ENCODE measurements at regions of chr12 and their contacts with region 1.

Region 1: GRCh38 chr12:14995583-14996425 is 23.0 kb downstream of the PDE6H start:
- DNase-seq: no peak
- ATAC-seq: peak; percentile 63
- H3K4me3 Mint-ChIP-seq: no peak overlapping the region
- H3K27ac Mint-ChIP-seq: peak overlapping the region; percentile 37
- H3K4me1 Mint-ChIP-seq: peaks cover 30% of the 10 kb centered on the region
- H3K27me3 Mint-ChIP-seq: peaks cover 19% of the 10 kb centered on the region

Region 2: DNA sequence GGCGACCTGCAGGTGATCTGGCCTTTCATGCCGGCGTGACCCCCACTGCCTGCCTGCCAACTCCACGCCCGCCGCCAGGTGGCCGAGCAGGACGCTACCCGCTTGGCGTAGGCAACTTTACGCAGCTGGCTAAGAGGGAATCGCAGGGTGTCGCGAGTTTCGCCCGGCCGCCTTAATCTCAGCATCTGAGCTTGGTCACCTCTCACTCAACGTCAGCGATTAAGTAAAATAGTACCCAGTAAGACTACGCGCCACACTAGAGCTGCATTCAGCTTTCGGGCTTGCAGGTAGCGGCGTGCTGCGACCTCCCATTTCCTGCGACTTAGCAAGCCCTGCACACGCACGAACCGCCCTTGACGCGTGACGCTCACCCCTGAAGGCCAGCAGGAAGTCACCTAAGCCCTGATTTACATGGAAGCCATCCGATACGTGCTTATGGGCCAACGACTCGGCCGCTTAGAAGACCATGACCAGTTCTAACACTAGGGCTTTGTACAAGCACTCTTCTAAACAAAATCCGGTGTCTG is 225.8 kb before region 1 on chr12:
- CTCF ChIA-PET with region 1: interaction called, 8 read pairs
- POLR2A ChIA-PET with region 1: interaction called, 11 read pairs
- DNase-seq: peak; percentile 91
- ATAC-seq: peak; percentile 52
- H3K4me3 Mint-ChIP-seq: peak overlapping the region; percentile 99
- H3K27ac Mint-ChIP-seq: peak overlapping the region; percentile 99
- H3K4me1 Mint-ChIP-seq: peaks cover 48% of the 10 kb centered on the region
- H3K27me3 Mint-ChIP-seq: no peaks in the 10 kb centered on the region

Region 3: DNA sequence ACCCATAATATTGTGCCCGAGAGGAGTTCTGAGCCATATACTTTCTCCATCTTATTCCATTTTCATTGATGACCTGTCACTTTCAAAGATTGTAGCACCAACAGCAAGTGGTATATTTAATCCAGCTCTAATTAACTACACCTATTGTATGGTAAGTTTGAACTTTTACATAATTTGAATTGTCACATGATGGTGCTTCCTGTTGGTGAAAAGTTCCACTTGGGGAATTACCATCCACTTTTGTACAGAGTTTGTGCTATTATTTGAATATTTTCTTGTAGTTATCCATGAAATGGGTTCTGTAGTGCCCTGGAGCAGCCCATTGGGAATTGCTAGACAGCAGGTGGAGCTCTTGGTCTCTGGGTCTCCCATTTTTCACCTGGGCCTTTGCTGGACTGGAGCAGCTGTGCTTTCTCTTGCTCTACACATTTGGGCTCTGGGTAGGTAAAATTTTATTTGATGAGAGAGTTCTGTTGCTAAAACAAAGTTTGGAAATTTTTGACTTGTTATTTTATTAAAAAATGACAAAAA is 184.8 kb before region 1 on chr12:
- CTCF ChIA-PET with region 1: interaction called, 11 read pairs
- POLR2A ChIA-PET with region 1: no interaction called
- DNase-seq: no peak
- ATAC-seq: no peak
- H3K4me3 Mint-ChIP-seq: no peak overlapping the region
- H3K27ac Mint-ChIP-seq: no peak overlapping the region
- H3K4me1 Mint-ChIP-seq: peaks cover 16% of the 10 kb centered on the region
- H3K27me3 Mint-ChIP-seq: no peaks in the 10 kb centered on the region

Region 4: DNA sequence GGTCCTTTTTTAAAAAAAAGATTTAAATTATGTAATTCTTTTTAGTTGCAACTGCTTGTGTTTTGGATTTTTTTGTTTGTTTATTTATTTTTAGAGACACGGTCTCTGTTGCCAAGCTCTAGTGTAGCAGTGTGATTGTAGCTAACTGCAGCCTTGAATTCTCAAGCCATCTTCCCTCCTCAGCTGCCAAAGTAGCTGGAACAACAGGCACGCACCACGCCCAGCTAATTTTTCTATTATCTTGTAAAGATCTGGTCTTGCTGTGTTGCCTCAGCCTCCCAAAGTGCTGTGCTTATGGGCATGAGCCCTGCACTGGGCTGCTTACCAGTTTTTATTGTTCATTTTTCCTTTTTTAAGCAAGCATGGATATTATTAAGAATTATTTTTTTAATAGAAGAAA is 141.8 kb before region 1 on chr12:
- CTCF ChIA-PET with region 1: interaction called, 89 read pairs
- POLR2A ChIA-PET with region 1: no interaction called
- DNase-seq: no peak
- ATAC-seq: no peak
- H3K4me3 Mint-ChIP-seq: no peak overlapping the region
- H3K27ac Mint-ChIP-seq: no peak overlapping the region
- H3K4me1 Mint-ChIP-seq: no peaks in the 10 kb centered on the region
- H3K27me3 Mint-ChIP-seq: no peaks in the 10 kb centered on the region

Region 5: GRCh38 chr12:14948672-14949071 is 47.1 kb before region 1 on chr12:
- CTCF ChIA-PET with region 1: interaction called, 15 read pairs
- POLR2A ChIA-PET with region 1: interaction called, 3 read pairs
- DNase-seq: peak; percentile 81
- ATAC-seq: peak; percentile 79
- H3K4me3 Mint-ChIP-seq: peak overlapping the region; percentile 76
- H3K27ac Mint-ChIP-seq: peak overlapping the region; percentile 93
- H3K4me1 Mint-ChIP-seq: peaks cover 83% of the 10 kb centered on the region
- H3K27me3 Mint-ChIP-seq: no peaks in the 10 kb centered on the region

Region 6: GRCh38 chr12:14979468-14979867 is 16.3 kb before region 1 on chr12:
- CTCF ChIA-PET with region 1: interaction called, 14 read pairs
- POLR2A ChIA-PET with region 1: no interaction called
- DNase-seq: no peak
- ATAC-seq: peak; percentile 59
- H3K4me3 Mint-ChIP-seq: peak overlapping the region; percentile 35
- H3K27ac Mint-ChIP-seq: peak overlapping the region; percentile 30
- H3K4me1 Mint-ChIP-seq: peaks cover 65% of the 10 kb centered on the region
- H3K27me3 Mint-ChIP-seq: no peaks in the 10 kb centered on the region

Measured in activated CD8-positive, alpha-beta T cell treated with anti-CD3 and anti-CD28 coated beads, Interleukin-2, amount 10 ng/mL, durations not matched to agents 7 days and 5 days (primary cell).